Heart right ventricle (tissue), 16 donors: ENCODE measurements at regions of chr4 and their contacts with region 1.

Region 1: DNA sequence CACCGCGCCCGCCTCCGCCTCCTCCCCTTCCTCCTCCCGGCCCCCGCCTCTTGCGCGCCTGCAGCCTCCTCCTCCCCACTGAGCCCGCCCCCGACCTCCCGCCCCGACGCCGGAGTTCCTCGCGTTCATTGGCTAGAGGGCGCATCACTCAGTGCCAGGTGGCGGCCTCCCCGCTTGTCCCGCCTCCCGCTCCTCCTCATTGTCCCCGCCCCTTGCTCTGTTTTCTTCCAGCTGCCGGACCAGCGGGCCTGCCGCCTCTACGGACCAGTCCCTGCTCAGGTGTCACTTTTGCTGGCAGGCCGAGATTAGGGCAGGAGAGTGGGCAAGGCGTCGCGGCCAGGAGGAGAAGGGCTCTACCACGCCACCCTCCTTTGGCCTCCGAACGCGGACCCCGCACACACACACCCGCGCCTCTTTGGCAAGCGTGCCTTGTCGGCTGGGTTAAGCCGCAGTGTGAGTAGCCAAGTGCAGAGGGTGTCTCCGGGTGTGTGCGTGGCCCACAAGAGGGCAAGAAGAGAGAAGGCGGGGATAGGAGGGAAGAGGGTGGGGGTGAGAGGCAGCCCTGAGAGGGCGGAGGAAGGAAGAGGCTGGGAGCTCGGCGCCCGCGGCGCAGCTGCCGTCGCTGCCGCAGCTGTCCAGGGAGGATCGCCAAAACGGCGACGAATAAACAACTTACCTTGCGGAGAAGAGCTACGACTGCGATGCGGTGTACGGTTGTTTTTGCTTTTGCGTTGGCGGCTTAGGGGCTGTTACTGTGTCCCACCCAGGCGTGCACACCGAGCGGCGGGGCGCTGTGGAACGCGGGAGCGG is 436 bp upstream of the PPP3CA start:
- DNase-seq: peak; percentile 99 to 100
- ATAC-seq: peak; percentile 92 to 98 (median 97)
- H3K4me3 ChIP-seq: peak overlapping the region; percentile 81 to 95 (median 92)
- H3K27ac ChIP-seq: peak overlapping the region; percentile 91 to 99 (median 96)
- H3K4me1 ChIP-seq: peaks cover 0 to 41% (median 26%) of the 10 kb centered on the region in 9 donors
- H3K27me3 ChIP-seq: no peaks in the 10 kb centered on the region
- CTCF ChIP-seq: peak in 2 of 9 donors; percentile 12 to 26

Region 2: GRCh38 chr4:101169044-101170014 is 178.4 kb before region 1 on chr4:
- intact Hi-C with region 1: loop called in 1 of 10 experiments (anchors 5 kb)
- DNase-seq: peak in 1 of 2 donors; percentile 72
- ATAC-seq: peak; percentile 87 to 97 (median 94)
- H3K4me3 ChIP-seq: no peak overlapping the region
- H3K27ac ChIP-seq: no peak overlapping the region
- H3K4me1 ChIP-seq: peaks cover 0 to 21% (median 0%) of the 10 kb centered on the region in 9 donors
- H3K27me3 ChIP-seq: no peaks in the 10 kb centered on the region
- CTCF ChIP-seq: peak; percentile 62 to 88 (median 80)

Region 3: GRCh38 chr4:101191302-101192098 is 156.3 kb before region 1 on chr4:
- intact Hi-C with region 1: loop called in 8 of 10 experiments (anchors 2 to 10 kb)
- DNase-seq: peak; percentile 64 to 89
- ATAC-seq: peak; percentile 95 to 100 (median 99)
- H3K4me3 ChIP-seq: peak overlapping the region in 4 of 10 donors; percentile 11 to 15 (median 12)
- H3K27ac ChIP-seq: peak overlapping the region in 9 of 10 donors; percentile 15 to 84 (median 67)
- H3K4me1 ChIP-seq: peaks cover 0 to 50% (median 23%) of the 10 kb centered on the region in 9 donors
- H3K27me3 ChIP-seq: no peaks in the 10 kb centered on the region
- CTCF ChIP-seq: no peak

Region 4: DNA sequence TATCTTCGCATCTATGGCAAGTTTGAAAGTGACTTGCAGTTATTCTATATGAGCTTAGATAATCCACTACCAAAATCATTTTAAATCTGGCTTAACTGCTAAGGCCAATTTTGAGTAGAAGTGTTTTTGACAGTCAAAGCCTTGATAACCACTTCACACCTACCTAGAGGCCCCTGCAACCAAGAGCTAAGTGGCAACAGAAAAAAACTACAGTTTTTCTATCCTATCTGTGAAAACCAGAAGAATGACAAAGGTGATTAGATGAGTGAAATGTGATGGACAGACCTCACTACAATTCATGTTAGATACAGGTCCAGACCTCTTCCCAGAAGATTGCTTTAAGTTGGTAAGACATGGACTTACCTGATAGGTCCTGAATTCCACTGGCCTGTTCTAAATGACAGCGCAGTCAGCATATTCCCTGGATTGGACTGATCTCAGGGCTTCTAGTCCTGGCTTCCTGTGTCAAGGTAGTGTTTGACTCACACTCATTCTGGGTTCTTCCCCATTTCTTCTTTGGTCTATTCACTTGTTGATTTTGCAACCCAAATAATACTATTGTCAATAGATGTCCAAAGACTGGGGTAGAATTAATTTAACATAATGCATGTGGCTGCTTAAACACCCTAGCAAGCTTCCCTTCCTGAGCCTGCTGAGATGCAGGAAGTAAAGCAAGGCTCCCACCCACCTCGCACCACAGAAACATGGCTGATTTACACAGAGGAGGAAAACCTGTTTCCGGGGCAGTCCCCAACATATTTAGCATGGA is 65.5 kb before region 1 on chr4:
- intact Hi-C with region 1: loop called in 5 of 10 experiments (anchors 5 to 10 kb)
- DNase-seq: no peak
- ATAC-seq: peak in 1 of 8 donors; percentile 37
- H3K4me3 ChIP-seq: no peak overlapping the region
- H3K27ac ChIP-seq: peak overlapping the region in 2 of 10 donors; percentile 4 to 6
- H3K4me1 ChIP-seq: peaks cover 0 to 75% (median 48%) of the 10 kb centered on the region in 9 donors
- H3K27me3 ChIP-seq: no peaks in the 10 kb centered on the region
- CTCF ChIP-seq: no peak

Region 5: DNA sequence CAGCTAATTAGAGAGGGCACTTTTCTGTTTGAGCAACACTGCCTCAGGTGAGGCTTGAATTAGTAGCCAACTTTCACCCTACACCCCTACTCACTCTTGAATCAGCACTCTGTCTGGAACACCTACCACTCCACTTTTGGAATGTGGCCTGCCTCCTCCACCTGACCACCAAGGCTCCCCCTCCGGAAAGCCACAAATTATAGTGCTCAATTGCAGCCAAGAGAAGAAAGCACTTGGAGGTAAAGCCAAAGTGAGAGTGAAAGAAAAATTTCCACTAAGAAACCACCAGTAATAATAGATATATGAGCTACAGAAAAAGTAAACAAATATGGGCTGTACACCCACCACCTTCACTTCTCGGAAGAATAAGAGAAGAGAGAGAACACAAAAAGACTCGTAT is 41.5 kb before region 1 on chr4:
- intact Hi-C with region 1: loop called in 1 of 10 experiments (anchors 5 kb)
- DNase-seq: no peak
- ATAC-seq: no peak
- H3K4me3 ChIP-seq: no peak overlapping the region
- H3K27ac ChIP-seq: no peak overlapping the region
- H3K4me1 ChIP-seq: peaks cover 0 to 49% (median 17%) of the 10 kb centered on the region in 9 donors
- H3K27me3 ChIP-seq: no peaks in the 10 kb centered on the region
- CTCF ChIP-seq: no peak

Region 6: GRCh38 chr4:101475246-101475645 is 127.5 kb after region 1 on chr4:
- intact Hi-C with region 1: no loop called
- DNase-seq: no peak
- ATAC-seq: no peak
- H3K4me3 ChIP-seq: no peak overlapping the region
- H3K27ac ChIP-seq: no peak overlapping the region
- H3K4me1 ChIP-seq: no peaks in the 10 kb centered on the region
- H3K27me3 ChIP-seq: no peaks in the 10 kb centered on the region
- CTCF ChIP-seq: no peak

Region 7: DNA sequence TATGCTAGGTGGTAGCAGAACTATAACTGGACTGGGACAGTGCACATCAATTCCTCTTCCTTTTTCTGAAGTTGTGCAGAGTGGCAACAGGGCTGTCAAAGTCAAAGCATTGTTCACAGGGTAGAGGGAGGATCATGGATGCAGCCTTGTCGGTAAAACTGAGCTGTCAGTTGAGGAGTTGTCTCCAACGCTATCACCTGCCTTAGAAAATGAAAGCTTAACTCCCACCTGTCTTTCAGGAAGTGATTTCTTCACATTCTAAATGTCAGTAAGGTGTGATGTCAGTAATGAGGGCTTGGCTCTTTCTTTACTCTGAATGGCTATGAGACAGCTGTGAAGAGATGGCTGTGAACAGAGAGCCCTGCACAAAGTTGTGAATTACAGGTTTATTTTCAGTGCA is 376.3 kb after region 1 on chr4:
- intact Hi-C with region 1: loop called in 3 of 10 experiments (anchors 5 to 10 kb)
- DNase-seq: no peak
- ATAC-seq: peak in 1 of 8 donors; percentile 25
- H3K4me3 ChIP-seq: no peak overlapping the region
- H3K27ac ChIP-seq: no peak overlapping the region
- H3K4me1 ChIP-seq: no peaks in the 10 kb centered on the region
- H3K27me3 ChIP-seq: no peaks in the 10 kb centered on the region
- CTCF ChIP-seq: no peak